ENCODE measurements at regions of chr17 and their contacts with region 1.

Region 1: DNA sequence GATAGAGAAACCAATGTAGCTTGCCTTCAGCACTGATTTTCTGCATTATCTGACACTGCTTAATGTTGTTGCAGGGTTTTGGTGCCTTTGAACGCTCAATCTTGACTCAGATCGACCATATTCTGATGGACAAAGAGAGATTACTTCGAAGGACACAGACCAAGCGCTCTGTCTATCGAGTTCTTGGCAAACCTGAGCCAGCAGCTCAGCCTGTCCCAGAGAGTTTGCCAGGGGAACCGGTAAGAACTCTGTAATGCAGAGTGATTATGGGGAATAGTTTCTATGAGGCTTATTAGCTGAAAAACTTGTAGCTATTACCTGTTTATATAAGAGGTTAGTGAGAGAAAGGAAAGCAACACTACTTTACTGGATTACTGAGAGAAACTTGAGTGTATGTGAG is 40.4 kb downstream of the AATF start:
- DNase-seq: no peak
- ATAC-seq: no peak
- H3K4me3 Mint-ChIP-seq: no peak overlapping the region
- H3K27ac Mint-ChIP-seq: no peak overlapping the region
- H3K4me1 Mint-ChIP-seq: peaks cover under 1% of the 10 kb centered on the region
- H3K27me3 Mint-ChIP-seq: no peaks in the 10 kb centered on the region
- CTCF ChIP-seq: no peak

Region 2: GRCh38 chr17:36697903-36698530 is 291.2 kb before region 1 on chr17:
- CTCF ChIA-PET with region 1: no interaction called
- POLR2A ChIA-PET with region 1: no interaction called
- intact Hi-C with region 1: no loop called
- DNase-seq: no peak
- ATAC-seq: no peak
- H3K4me3 Mint-ChIP-seq: no peak overlapping the region
- H3K27ac Mint-ChIP-seq: no peak overlapping the region
- H3K4me1 Mint-ChIP-seq: no peaks in the 10 kb centered on the region
- H3K27me3 Mint-ChIP-seq: peaks cover 55% of the 10 kb centered on the region
- CTCF ChIP-seq: no peak

Region 3: DNA sequence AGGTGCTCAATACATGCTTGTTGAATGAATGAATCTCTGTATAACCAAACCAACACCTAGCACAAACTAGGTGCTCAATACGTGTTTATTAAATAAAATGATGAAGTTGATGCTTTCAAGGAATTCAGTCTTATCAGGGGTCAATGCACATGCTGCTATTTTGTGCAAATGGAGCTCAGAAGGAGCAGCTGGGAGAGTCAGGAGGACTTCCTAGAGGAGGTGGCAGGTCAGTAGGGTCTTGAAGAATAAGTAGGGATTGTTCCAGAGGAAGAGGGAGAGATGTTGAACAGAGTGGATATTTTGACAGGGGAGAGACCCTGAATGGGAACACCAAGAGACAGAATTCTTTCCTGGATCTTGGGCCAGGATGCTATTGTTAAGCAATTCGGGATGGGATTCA is 144.6 kb before region 1 on chr17:
- CTCF ChIA-PET with region 1: no interaction called
- POLR2A ChIA-PET with region 1: interaction called, 12 read pairs
- intact Hi-C with region 1: no loop called
- DNase-seq: no peak
- ATAC-seq: no peak
- H3K4me3 Mint-ChIP-seq: no peak overlapping the region
- H3K27ac Mint-ChIP-seq: no peak overlapping the region
- H3K4me1 Mint-ChIP-seq: no peaks in the 10 kb centered on the region
- H3K27me3 Mint-ChIP-seq: peaks cover 42% of the 10 kb centered on the region
- CTCF ChIP-seq: no peak

Region 4: GRCh38 chr17:37098910-37099664 is 109.9 kb after region 1 on chr17:
- CTCF ChIA-PET with region 1: no interaction called
- POLR2A ChIA-PET with region 1: no interaction called
- intact Hi-C with region 1: no loop called
- DNase-seq: no peak
- ATAC-seq: no peak
- H3K4me3 Mint-ChIP-seq: no peak overlapping the region
- H3K27ac Mint-ChIP-seq: no peak overlapping the region
- H3K4me1 Mint-ChIP-seq: peaks cover 2% of the 10 kb centered on the region
- H3K27me3 Mint-ChIP-seq: no peaks in the 10 kb centered on the region
- CTCF ChIP-seq: no peak

Measured in activated B cell treated with CpG ODN at 0.5 μM for 24 hours (primary cell).